Activated T-helper 1 cell treated with anti-CD3 and anti-CD28 coated beads, Interleukin-12 subunit alpha, Interleukin-12 subunit beta, Interleukin-2, Interleukin-4 antibody, amounts not matched to agents 30 ng/mL and 10 ng/mL and 1 ng/mL, durations not matched to agents 14 hours and 24 hours and 36 hours (primary cell): ENCODE measurements at regions of chr3 and their contacts with region 1.

Region 1: DNA sequence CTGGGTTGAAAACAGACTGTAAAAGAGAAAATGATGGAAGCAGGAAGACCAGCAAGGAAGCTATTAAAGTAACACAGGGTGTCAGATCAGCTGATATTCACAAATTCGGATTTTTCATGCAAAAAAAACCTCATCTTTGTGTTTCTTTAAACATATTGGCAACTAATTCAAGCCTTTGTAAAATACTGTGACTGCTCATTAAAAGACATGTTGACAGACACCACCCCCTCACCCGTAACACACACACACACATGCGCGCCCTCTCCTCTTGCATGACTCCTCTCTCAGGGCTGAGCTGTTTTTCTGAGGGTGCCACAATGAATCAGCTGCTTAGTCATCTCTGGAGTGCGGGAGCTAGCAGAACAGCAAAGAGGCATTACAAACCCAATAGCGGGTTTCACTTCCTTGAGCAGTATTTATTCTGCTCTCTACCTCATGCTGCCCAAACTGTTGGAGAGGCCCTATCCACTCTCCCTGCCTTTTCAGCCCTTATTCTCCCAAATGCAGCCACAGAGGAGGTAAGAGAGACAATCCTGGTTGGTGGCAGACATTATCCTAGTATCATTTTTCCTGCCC is 35.8 kb upstream of the CCDC80 start:
- DNase-seq: peak; percentile 89
- H3K4me3 Mint-ChIP-seq: peak overlapping the region; percentile 64
- H3K27ac Mint-ChIP-seq: peak overlapping the region; percentile 87
- H3K4me1 Mint-ChIP-seq: peaks cover 70% of the 10 kb centered on the region
- H3K27me3 Mint-ChIP-seq: no peaks in the 10 kb centered on the region

Region 2: GRCh38 chr3:110814170-110815007 is 1862.4 kb before region 1 on chr3:
- intact Hi-C with region 1: loop called (anchors 10 kb)
- DNase-seq: peak; percentile 9
- H3K4me3 Mint-ChIP-seq: peak overlapping the region; percentile 37
- H3K27ac Mint-ChIP-seq: peak overlapping the region; percentile 70
- H3K4me1 Mint-ChIP-seq: peaks cover 22% of the 10 kb centered on the region
- H3K27me3 Mint-ChIP-seq: peaks cover 11% of the 10 kb centered on the region

Region 3: GRCh38 chr3:112413722-112414121 is 263.0 kb before region 1 on chr3:
- intact Hi-C with region 1: no loop called
- DNase-seq: no peak
- H3K4me3 Mint-ChIP-seq: no peak overlapping the region
- H3K27ac Mint-ChIP-seq: no peak overlapping the region
- H3K4me1 Mint-ChIP-seq: peaks cover 10% of the 10 kb centered on the region
- H3K27me3 Mint-ChIP-seq: peaks cover 3% of the 10 kb centered on the region

Region 4: DNA sequence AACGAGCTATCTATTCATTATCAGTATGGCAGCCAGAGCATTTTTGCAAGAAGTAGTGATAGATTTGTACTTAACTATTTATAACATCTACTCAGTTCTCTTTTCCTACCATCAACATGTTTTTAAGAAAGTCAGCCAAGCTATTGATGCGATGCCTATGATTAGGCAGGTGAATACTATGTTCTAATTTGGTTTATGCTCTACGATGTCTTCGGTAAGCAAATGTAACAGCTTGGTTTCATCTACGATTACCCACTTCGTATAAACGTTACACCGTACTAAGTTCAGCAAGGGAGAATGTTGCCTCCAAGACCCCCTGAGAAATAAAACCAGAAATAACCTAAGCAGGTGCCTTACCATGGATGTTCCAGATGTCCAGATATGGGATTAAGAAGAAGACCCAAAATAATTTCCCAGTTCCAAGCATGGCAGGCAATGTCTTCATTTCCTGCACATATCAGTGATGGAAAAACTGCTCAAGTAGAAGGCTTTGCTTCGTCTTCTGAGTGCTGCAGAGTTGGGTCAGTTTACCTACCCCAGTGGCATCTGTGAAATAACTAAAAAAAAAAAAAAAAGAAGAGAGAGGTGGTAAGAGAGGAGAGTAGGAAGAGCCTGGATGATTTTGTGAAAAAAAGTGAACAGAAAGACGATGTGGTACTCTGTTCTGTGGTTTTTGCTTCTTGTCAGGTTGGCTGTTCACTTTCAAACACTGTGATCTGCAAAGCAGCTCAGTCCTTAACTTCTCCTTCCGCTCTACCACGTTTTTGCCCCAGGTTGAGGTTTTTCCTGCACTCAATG is 177.6 kb before region 1 on chr3 and contains the start of gene BTLA:
- intact Hi-C with region 1: loop called (anchors 5 kb)
- DNase-seq: peak; percentile 35
- H3K4me3 Mint-ChIP-seq: peak within 1 kb of the TSS; percentile 95
- H3K27ac Mint-ChIP-seq: peak within 1 kb of the TSS; percentile 97
- H3K4me1 Mint-ChIP-seq: peaks cover 67% of the 10 kb centered on the region
- H3K27me3 Mint-ChIP-seq: no peaks in the 10 kb centered on the region
- total RNA-seq, gene BTLA: 39.4 and 40.7 TPM in 2 replicates

Region 5: GRCh38 chr3:112734718-112735350 is 58.1 kb after region 1 on chr3:
- intact Hi-C with region 1: loop called (anchors 1 kb)
- DNase-seq: peak; percentile 43
- H3K4me3 Mint-ChIP-seq: no peak overlapping the region
- H3K27ac Mint-ChIP-seq: no peak overlapping the region
- H3K4me1 Mint-ChIP-seq: peaks cover 47% of the 10 kb centered on the region
- H3K27me3 Mint-ChIP-seq: peaks cover 2% of the 10 kb centered on the region

Region 6: DNA sequence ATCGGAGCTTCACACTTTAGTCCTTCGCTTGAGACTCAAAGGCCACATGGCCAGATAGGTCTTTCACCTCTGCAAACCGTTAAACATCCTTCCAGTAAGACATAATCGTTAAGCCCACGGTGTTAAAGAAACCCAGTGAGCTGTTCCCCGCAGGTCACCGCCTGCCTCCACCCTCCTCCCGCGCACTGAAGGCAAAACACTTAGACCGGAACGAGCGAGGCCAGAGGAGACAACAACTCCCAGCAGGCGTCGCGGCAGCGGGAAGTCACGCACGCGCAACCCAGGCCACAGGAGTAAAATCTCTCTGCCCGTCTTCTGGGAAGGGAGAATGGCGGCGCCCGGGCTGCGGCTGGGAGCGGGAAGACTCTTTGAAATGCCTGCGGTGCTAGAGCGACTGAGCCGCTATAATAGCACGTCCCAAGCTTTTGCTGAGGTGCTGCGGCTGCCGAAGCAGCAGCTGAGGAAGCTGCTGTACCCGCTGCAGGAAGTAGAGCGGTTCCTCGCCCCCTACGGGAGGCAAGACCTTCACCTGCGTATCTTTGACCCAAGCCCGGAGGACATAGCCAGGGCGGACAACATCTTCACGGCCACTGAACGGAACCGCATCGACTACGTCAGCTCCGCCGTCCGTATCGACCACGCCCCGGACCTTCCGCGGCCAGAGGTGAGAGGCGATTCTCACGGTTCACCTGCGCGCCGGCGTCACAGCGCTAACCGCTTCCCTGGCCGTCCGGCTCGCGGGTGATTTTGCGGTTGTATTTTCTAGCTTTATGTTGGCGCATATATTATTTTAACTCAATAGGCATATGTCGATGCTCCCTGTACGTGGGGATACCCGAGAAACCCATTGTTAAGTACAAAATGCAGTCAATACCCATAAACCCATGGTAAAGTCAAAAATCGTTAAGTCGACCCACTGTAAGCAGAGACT is 314.2 kb after region 1 on chr3 and contains the start of gene GTPBP8:
- intact Hi-C with region 1: loop called (anchors 1 kb)
- DNase-seq: peak; percentile 81
- H3K4me3 Mint-ChIP-seq: peak within 1 kb of the TSS; percentile 90
- H3K27ac Mint-ChIP-seq: peak within 1 kb of the TSS; percentile 93
- H3K4me1 Mint-ChIP-seq: peaks cover 79% of the 10 kb centered on the region
- H3K27me3 Mint-ChIP-seq: no peaks in the 10 kb centered on the region
- total RNA-seq, gene GTPBP8: 22.6 and 25.0 TPM in 2 replicates

Region 7: DNA sequence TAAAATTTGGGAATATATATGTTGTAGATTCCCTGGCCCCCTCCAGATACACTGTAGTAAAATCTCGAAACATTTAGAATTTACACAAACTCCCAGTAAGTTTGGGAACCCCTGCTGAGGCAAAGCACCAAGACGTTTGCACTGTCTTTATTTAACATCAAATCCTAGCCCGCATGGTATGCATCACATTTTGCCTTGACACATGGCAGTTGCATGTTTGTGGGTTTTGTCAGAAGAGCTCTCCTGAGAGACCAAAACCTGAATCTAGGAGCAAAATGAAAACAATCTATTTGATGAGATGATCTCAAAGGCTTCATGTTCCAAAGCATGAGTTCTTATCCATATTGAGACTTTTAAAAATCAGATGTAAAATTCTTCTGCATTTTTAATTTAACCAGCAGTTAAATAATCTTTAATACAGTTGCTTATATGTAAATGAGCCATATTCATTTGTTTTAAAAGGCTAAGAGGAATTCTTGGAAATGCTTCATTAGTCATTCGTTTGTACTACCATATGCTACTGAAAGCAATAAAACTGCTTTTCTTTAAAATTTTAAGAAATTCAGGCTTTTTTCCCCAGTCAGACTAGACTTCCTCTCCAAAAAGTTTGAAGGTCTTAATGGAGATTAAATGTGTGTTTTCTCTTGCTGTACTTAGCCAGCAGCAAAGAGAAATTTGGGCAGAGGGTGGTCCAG is 429.4 kb after region 1 on chr3:
- intact Hi-C with region 1: no loop called
- DNase-seq: no peak
- H3K4me3 Mint-ChIP-seq: no peak overlapping the region
- H3K27ac Mint-ChIP-seq: no peak overlapping the region
- H3K4me1 Mint-ChIP-seq: peaks cover 11% of the 10 kb centered on the region
- H3K27me3 Mint-ChIP-seq: no peaks in the 10 kb centered on the region

Region 8: DNA sequence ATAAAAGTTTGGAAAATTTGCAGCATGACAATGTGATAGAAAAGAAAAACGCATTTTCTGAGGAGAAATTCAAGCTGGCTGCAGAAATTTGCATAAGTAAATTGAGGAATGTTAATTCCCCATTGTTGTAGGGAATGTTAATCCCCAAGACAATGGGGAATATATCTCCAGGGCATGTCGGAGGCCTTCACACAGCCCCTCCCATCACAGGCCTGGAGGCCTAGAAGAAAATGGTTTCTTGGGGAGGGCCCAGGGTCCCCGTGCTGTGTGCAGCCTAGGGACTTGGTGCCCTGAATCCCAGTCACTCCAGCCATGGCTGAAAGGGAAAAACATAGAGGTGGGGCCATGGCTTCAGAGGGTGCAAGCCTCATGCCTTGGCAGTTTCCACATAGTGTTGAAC is 635.7 kb after region 1 on chr3:
- intact Hi-C with region 1: no loop called
- DNase-seq: no peak
- H3K4me3 Mint-ChIP-seq: no peak overlapping the region
- H3K27ac Mint-ChIP-seq: no peak overlapping the region
- H3K4me1 Mint-ChIP-seq: no peaks in the 10 kb centered on the region
- H3K27me3 Mint-ChIP-seq: no peaks in the 10 kb centered on the region

Region 9: DNA sequence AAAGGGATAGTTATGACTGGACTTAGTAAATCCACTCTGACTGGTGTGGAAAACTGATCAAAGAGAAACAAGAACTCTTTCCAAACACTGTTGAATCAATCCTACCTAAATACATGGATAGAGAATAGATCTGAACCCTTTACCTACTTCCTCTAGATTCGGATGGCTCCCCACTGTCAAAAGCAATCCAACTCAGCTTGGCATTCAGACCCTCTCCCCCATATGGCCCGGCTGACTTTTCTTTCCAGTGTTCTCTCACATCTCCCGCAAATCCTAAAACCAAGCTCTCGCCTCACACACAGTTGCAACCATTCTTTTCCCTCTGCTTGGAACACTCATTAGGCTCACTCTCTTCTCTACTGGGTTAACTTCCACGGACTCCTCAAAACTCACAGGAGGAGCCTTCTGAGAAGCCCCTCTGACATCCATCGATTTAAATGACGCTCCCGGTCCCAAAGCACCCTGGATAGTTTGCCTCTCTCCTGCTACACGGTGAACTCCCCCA is 837.6 kb after region 1 on chr3:
- intact Hi-C with region 1: loop called (anchors 10 kb)
- DNase-seq: no peak
- H3K4me3 Mint-ChIP-seq: no peak overlapping the region
- H3K27ac Mint-ChIP-seq: no peak overlapping the region
- H3K4me1 Mint-ChIP-seq: peaks cover 7% of the 10 kb centered on the region
- H3K27me3 Mint-ChIP-seq: peaks cover 24% of the 10 kb centered on the region